CD8-positive, alpha-beta T cell (primary cell): ENCODE measurements at regions of chr12 and their contacts with region 1.

Region 1: GRCh38 chr12:46372544-46373110 is at the start of gene SLC38A2:
- DNase-seq: peak; percentile 94 to 99 (median 97)
- ATAC-seq: peak; percentile 84
- H3K4me3 ChIP-seq: peak within 1 kb of the TSS; percentile 93 to 96
- H3K4me3 Mint-ChIP-seq: peak within 1 kb of the TSS; percentile 89
- H3K27ac ChIP-seq: peak within 1 kb of the TSS; percentile 88 to 93
- H3K27ac Mint-ChIP-seq: peak within 1 kb of the TSS; percentile 98
- H3K4me1 ChIP-seq: peaks cover 38% of the 10 kb centered on the region
- H3K4me1 Mint-ChIP-seq: peaks cover 50% of the 10 kb centered on the region
- H3K27me3 ChIP-seq: no peaks in the 10 kb centered on the region
- H3K27me3 Mint-ChIP-seq: no peaks in the 10 kb centered on the region
- CTCF ChIP-seq: no peak
- total RNA-seq, gene SLC38A2: 268 to 279 TPM

Region 2: DNA sequence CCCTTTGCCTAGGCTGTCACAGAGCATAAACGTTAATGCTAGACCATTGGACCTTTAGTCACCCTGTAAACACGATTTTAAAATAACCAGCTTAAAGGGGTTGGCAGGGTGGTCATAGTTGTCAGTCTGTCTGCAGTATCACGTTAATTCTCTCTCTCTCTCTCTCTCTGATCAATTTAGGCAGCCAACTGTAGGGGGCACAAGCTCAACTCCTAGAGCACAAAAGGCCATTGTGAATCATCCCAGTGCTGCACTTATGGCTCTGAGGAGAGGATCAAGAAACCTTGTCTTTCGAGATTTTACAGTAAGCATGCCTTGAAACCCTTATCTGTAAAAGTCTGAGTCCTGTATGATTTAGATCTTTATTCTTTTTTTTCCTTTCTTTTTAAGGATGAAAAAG is 479.4 kb before region 1 on chr12:
- CTCF ChIA-PET with region 1: no interaction called
- POLR2A ChIA-PET with region 1: no interaction called
- intact Hi-C with region 1: no loop called
- DNase-seq: no peak
- ATAC-seq: no peak
- H3K4me3 ChIP-seq: no peak overlapping the region
- H3K4me3 Mint-ChIP-seq: no peak overlapping the region
- H3K27ac ChIP-seq: no peak overlapping the region
- H3K27ac Mint-ChIP-seq: no peak overlapping the region
- H3K4me1 ChIP-seq: peaks cover 18% of the 10 kb centered on the region
- H3K4me1 Mint-ChIP-seq: peaks cover 29% of the 10 kb centered on the region
- H3K27me3 ChIP-seq: no peaks in the 10 kb centered on the region
- H3K27me3 Mint-ChIP-seq: no peaks in the 10 kb centered on the region
- CTCF ChIP-seq: no peak

Region 3: GRCh38 chr12:46153268-46153872 is 219.3 kb before region 1 on chr12:
- CTCF ChIA-PET with region 1: no interaction called
- POLR2A ChIA-PET with region 1: no interaction called
- intact Hi-C with region 1: loop called in 1 of 2 experiments (anchors 5 kb)
- DNase-seq: peak in 2 of 9 experiments; percentile 40 to 65
- ATAC-seq: no peak
- H3K4me3 ChIP-seq: no peak overlapping the region
- H3K4me3 Mint-ChIP-seq: no peak overlapping the region
- H3K27ac ChIP-seq: no peak overlapping the region
- H3K27ac Mint-ChIP-seq: no peak overlapping the region
- H3K4me1 ChIP-seq: peaks cover 13% of the 10 kb centered on the region
- H3K4me1 Mint-ChIP-seq: peaks cover 19% of the 10 kb centered on the region
- H3K27me3 ChIP-seq: no peaks in the 10 kb centered on the region
- H3K27me3 Mint-ChIP-seq: peaks cover 1% of the 10 kb centered on the region
- CTCF ChIP-seq: peak; percentile 97

Region 4: DNA sequence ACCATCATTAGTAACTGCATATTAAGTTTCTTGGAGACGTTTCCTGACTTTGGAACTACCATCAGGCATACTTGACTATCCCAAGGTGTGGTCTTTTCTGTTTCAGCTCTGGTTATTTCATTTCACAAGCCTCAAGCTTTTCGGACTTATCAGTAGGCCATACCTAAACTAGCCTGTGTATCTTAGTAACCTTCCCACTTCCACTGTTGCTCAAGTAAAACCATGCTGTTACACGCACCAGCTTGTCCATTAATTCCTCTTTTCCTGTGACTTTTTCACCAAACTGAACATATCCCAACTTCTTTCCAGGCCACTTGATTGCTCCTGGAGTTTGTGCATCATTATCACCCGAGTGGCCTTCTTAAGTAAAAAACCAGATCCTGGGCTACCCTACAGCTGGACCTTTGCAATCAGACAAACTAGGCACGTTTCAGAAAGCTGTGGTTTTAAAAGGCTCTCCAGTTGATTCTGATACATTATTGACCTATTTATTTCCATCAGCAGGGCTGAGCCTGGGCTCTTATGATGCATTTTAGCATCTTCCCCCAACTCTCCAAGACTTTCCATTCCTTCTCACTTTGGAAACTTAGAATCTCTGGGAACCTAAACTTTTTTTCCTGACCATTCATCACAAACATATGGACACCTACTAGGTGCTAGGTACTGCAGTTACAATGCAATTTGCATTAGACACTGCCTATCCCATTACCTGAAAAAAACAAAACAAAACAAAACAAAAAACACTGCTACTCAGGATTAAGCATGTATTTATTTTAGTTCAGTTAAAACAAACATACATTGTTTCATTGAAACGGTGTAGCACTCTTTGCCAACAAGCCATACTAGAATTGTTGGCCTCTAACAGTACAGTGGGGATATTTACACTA is 14.9 kb before region 1 on chr12:
- CTCF ChIA-PET with region 1: no interaction called
- POLR2A ChIA-PET with region 1: interaction called, 15 read pairs
- intact Hi-C with region 1: no loop called
- DNase-seq: no peak
- ATAC-seq: no peak
- H3K4me3 ChIP-seq: no peak overlapping the region
- H3K4me3 Mint-ChIP-seq: no peak overlapping the region
- H3K27ac ChIP-seq: no peak overlapping the region
- H3K27ac Mint-ChIP-seq: peak overlapping the region; percentile 52
- H3K4me1 ChIP-seq: peaks cover 8% of the 10 kb centered on the region
- H3K4me1 Mint-ChIP-seq: peaks cover 41% of the 10 kb centered on the region
- H3K27me3 ChIP-seq: no peaks in the 10 kb centered on the region
- H3K27me3 Mint-ChIP-seq: no peaks in the 10 kb centered on the region
- CTCF ChIP-seq: no peak

Region 5: GRCh38 chr12:46459861-46460545 is 87.4 kb after region 1 on chr12:
- CTCF ChIA-PET with region 1: no interaction called
- POLR2A ChIA-PET with region 1: interaction called, 4 read pairs
- intact Hi-C with region 1: loop called in 1 of 2 experiments (anchors 1 kb)
- DNase-seq: peak in 2 of 9 experiments; percentile 6 to 42
- ATAC-seq: no peak
- H3K4me3 ChIP-seq: peak overlapping the region in 1 of 2 experiments; percentile 16
- H3K4me3 Mint-ChIP-seq: peak overlapping the region; percentile 72
- H3K27ac ChIP-seq: peak overlapping the region in 1 of 2 experiments; percentile 64
- H3K27ac Mint-ChIP-seq: peak overlapping the region; percentile 95
- H3K4me1 ChIP-seq: peaks cover 57% of the 10 kb centered on the region
- H3K4me1 Mint-ChIP-seq: peaks cover 57% of the 10 kb centered on the region
- H3K27me3 ChIP-seq: no peaks in the 10 kb centered on the region
- H3K27me3 Mint-ChIP-seq: no peaks in the 10 kb centered on the region
- CTCF ChIP-seq: no peak

Region 6: DNA sequence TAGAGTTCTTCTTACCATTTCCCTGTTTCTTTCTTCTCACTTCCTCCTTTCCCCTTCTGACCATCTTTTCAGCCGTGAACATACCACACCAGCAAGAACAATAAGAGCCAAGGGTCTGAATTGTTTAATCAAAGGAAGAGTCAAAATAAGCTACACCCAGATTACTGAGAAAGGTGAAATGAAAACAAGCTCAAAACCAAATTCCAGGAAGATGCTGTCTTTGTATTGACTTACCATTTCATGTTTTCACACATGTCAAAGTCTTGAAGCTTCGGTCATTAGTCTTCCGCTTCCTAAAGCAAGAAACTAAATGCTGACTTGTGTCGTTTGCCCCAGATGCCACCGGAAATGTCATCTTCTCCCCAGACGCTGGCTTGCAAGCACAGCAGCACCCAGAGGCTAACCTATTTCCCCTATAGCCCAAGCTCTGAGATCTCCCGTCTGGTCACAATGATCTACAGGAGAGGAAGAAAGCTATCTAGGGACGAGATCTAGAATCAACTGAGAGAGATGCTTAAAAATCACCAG is 843.6 kb after region 1 on chr12:
- CTCF ChIA-PET with region 1: no interaction called
- POLR2A ChIA-PET with region 1: interaction called, 4 read pairs
- intact Hi-C with region 1: loop called (anchors 5 kb)
- DNase-seq: peak; percentile 28 to 92 (median 73)
- ATAC-seq: peak; percentile 46
- H3K4me3 ChIP-seq: peak overlapping the region; percentile 75 to 80
- H3K4me3 Mint-ChIP-seq: peak overlapping the region; percentile 95
- H3K27ac ChIP-seq: peak overlapping the region; percentile 74 to 81
- H3K27ac Mint-ChIP-seq: peak overlapping the region; percentile 96
- H3K4me1 ChIP-seq: peaks cover 5% of the 10 kb centered on the region
- H3K4me1 Mint-ChIP-seq: peaks cover 30% of the 10 kb centered on the region
- H3K27me3 ChIP-seq: no peaks in the 10 kb centered on the region
- H3K27me3 Mint-ChIP-seq: no peaks in the 10 kb centered on the region
- CTCF ChIP-seq: no peak

Region 7: GRCh38 chr12:47812797-47813510 is 1440.3 kb after region 1 on chr12:
- CTCF ChIA-PET with region 1: no interaction called
- POLR2A ChIA-PET with region 1: no interaction called
- intact Hi-C with region 1: loop called (anchors 5 to 10 kb)
- DNase-seq: peak; percentile 77 to 95 (median 92)
- ATAC-seq: peak; percentile 73
- H3K4me3 ChIP-seq: peak overlapping the region; percentile 44 to 59
- H3K4me3 Mint-ChIP-seq: peak overlapping the region; percentile 82
- H3K27ac ChIP-seq: peak overlapping the region; percentile 65 to 73
- H3K27ac Mint-ChIP-seq: peak overlapping the region; percentile 97
- H3K4me1 ChIP-seq: peaks cover 95% of the 10 kb centered on the region
- H3K4me1 Mint-ChIP-seq: peaks cover 93% of the 10 kb centered on the region
- H3K27me3 ChIP-seq: no peaks in the 10 kb centered on the region
- H3K27me3 Mint-ChIP-seq: no peaks in the 10 kb centered on the region
- CTCF ChIP-seq: no peak